Heart left ventricle (tissue), 16 donors: ENCODE measurements at regions of chr11 and their contacts with region 1.

Region 1: GRCh38 chr11:37525336-37525735 is 927.3 kb upstream of the RAG2 start:
- DNase-seq: no peak
- ATAC-seq: no peak
- H3K4me3 ChIP-seq: no peak overlapping the region
- H3K27ac ChIP-seq: no peak overlapping the region
- H3K4me1 ChIP-seq: no peaks in the 10 kb centered on the region
- H3K27me3 ChIP-seq: no peaks in the 10 kb centered on the region
- CTCF ChIP-seq: peak in 1 of 12 donors; percentile 8
- POLR2A ChIP-seq: no peak

Region 2: DNA sequence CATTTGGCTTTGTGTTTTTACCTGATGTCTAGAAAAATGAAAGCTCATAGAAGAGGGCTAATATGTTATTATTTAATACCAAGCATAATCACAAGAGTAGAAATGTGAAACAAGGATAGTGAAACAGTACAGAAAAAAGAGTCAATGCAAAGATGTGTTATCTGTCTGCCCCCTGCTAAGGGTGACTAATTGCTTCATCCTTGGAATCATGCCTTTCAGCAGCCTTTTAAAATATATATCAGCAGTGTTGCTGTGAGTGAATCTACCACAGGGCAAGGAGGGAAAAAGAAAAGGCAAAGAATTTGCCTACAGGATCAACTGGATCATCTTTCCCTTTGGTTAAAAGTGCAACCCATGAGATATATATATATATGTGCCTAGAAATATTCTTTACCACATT is 60.1 kb before region 1 on chr11:
- intact Hi-C with region 1: loop called in 1 of 10 experiments (anchors 10 kb)
- DNase-seq: no peak
- ATAC-seq: no peak
- H3K4me3 ChIP-seq: no peak overlapping the region
- H3K27ac ChIP-seq: no peak overlapping the region
- H3K4me1 ChIP-seq: no peaks in the 10 kb centered on the region
- H3K27me3 ChIP-seq: no peaks in the 10 kb centered on the region
- CTCF ChIP-seq: no peak
- POLR2A ChIP-seq: no peak